Caco-2 (cell line): ENCODE measurements at regions of chr3 and their contacts with region 1.

Region 1: DNA sequence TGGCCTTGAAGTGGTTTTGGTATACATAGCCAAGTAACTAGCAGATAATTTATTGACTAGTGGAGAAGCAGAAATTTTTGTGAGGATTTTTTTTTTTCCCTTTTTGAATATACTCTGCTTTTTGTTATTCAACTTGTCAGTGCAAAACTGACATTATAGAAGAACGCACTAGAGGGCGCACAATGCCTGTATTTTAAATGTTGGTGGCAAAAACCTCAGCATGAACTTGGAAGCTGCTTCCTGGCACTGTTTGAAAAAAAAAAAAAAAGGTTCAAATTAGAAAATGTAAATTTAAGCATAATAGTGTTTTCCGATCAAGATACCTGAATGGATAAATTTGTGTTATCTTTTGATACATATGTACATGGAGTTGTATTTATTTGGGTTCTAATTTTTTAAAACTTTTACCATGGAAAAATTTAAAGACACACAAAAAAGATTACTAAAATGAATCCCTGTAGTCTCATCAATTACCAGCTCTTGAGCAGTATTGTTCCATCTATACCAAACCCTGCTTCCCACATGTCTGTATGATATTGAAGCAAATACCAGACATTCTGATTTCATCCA is 56.0 kb downstream of the SLC25A26 start:
- DNase-seq: peak; percentile 54 to 66
- H3K4me3 ChIP-seq: no peak overlapping the region
- H3K4me3 Mint-ChIP-seq: no peak overlapping the region
- H3K27ac Mint-ChIP-seq: no peak overlapping the region
- H3K4me1 ChIP-seq: no peaks in the 10 kb centered on the region
- H3K4me1 Mint-ChIP-seq: no peaks in the 10 kb centered on the region
- H3K27me3 ChIP-seq: no peaks in the 10 kb centered on the region
- H3K27me3 Mint-ChIP-seq: no peaks in the 10 kb centered on the region
- CTCF ChIP-seq: peak; percentile 50 to 67

Region 2: DNA sequence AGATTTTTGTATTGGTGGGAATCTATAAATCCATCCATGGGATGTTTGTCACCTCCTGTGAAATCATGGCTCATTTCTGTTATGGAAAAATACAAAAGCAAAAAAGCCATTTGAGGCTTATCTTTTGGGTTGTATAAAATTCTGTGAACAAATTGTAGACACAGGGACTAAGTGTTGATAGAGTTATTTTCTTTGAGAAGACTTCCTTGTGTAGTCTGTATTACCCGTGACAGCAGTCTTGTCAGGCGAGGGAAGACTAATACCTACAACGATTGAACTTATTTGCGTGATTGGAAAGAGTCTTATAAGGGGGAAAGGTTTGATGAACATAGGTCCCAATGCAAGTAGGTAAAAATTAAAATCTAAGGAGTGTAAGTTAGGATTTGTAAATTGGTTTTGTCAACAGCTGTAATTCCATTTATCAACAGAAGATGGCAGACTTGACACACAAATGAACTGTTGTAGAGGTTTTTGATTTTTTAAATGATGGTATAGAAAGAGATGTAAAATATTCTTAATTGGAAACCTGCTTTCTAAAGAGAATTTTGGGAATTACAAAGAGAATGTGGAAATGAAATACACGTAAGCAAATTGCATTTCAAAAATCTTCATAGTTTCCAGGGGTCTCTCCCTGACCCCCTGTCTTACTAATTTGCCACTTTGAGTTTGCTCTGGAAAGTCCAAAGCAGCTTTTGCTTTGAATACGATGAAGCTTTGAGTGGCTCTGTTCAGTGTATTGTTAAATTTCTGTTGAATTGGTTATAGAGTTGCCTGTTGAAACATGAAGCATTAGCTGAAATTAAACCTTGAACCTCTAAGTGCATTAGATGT is 22.8 kb before region 1 on chr3:
- CTCF ChIA-PET with region 1: interaction called, 3 read pairs
- POLR2A ChIA-PET with region 1: no interaction called
- intact Hi-C with region 1: loop called (anchors 1 kb)
- DNase-seq: peak in 1 of 2 experiments; percentile 14
- H3K4me3 ChIP-seq: no peak overlapping the region
- H3K4me3 Mint-ChIP-seq: no peak overlapping the region
- H3K27ac Mint-ChIP-seq: no peak overlapping the region
- H3K4me1 ChIP-seq: no peaks in the 10 kb centered on the region
- H3K4me1 Mint-ChIP-seq: no peaks in the 10 kb centered on the region
- H3K27me3 ChIP-seq: no peaks in the 10 kb centered on the region
- H3K27me3 Mint-ChIP-seq: no peaks in the 10 kb centered on the region
- CTCF ChIP-seq: peak; percentile 57 to 75

Region 3: GRCh38 chr3:66372681-66373350 is 96.0 kb after region 1 on chr3:
- CTCF ChIA-PET with region 1: interaction called, 15 read pairs
- POLR2A ChIA-PET with region 1: no interaction called
- intact Hi-C with region 1: loop called (anchors 1 kb)
- DNase-seq: peak; percentile 73 to 74
- H3K4me3 ChIP-seq: no peak overlapping the region
- H3K4me3 Mint-ChIP-seq: no peak overlapping the region
- H3K27ac Mint-ChIP-seq: no peak overlapping the region
- H3K4me1 ChIP-seq: peaks cover 12% of the 10 kb centered on the region
- H3K4me1 Mint-ChIP-seq: peaks cover 12% of the 10 kb centered on the region
- H3K27me3 ChIP-seq: no peaks in the 10 kb centered on the region
- H3K27me3 Mint-ChIP-seq: no peaks in the 10 kb centered on the region
- CTCF ChIP-seq: peak; percentile 50 to 64

Region 4: DNA sequence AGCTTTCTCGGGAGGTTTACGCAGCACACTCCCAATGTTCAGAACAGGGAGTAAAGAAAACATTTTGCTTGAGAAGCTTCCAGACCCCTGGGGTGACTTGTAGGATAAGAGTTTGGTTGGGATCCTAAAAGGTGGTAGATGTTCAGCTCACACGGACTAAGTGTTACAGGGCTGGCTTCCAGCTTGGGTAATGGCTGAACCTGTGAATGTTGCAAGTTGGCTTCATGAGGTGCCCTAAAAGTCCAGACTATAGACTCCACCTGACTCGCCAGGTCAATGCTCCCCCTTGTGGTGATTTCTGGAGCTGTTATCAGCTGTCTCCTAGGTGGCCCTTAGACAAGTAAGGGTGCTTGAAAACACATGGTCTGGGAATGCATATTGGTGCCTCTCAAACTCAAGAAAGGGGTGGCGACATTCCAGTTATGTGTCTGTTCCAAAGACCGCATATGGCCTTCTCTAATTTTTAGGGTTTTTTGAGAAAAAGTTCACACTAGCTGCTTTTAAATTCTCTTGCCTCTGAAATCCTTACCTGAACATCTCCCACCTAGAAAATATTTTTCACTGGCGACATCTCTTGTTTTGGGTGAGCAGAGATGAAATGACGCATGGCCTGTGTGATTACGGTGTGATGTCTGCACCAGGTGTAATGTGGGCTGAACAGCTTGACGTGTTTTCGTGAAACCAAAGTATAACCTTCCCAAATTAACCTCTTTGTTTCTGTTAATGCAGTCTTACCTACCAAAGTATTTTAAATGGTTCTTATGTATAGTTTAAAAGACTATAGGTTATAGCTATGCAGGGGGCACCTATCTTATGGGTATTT is 545.6 kb after region 1 on chr3:
- CTCF ChIA-PET with region 1: interaction called, 3 read pairs
- POLR2A ChIA-PET with region 1: no interaction called
- intact Hi-C with region 1: loop called (anchors 1 kb)
- DNase-seq: peak; percentile 79 to 83
- H3K4me3 ChIP-seq: no peak overlapping the region
- H3K4me3 Mint-ChIP-seq: no peak overlapping the region
- H3K27ac Mint-ChIP-seq: no peak overlapping the region
- H3K4me1 ChIP-seq: no peaks in the 10 kb centered on the region
- H3K4me1 Mint-ChIP-seq: peaks cover 6% of the 10 kb centered on the region
- H3K27me3 ChIP-seq: no peaks in the 10 kb centered on the region
- H3K27me3 Mint-ChIP-seq: no peaks in the 10 kb centered on the region
- CTCF ChIP-seq: peak; percentile 61 to 81